Keratinocyte (primary cell): ENCODE measurements at regions of chr10 and their contacts with region 1.

Region 1: DNA sequence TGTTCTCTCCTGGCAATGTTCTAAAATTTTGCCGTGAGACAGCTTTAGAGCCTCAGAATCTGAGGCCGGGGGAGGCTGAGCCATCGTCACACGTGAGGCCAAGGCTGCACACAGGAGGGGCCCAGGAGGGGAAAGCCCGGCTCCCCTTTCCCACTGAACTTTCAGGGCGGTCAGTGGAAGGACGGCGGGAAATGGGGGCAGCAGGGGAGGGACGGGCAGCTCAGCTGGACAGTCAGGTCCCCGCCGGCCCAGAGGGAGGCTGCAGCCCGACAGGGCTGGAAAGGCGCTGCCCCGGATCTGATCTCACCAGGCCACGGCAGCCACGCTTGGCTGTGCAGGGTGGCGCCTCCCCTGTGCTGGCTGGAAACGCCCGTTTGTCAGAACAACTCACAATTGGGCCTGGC is 43.3 kb upstream of the ADGRA1 start:
- DNase-seq: no peak
- H3K4me3 ChIP-seq: no peak overlapping the region
- H3K27ac ChIP-seq: no peak overlapping the region
- H3K4me1 ChIP-seq: no peaks in the 10 kb centered on the region
- H3K27me3 ChIP-seq: peaks cover 25% of the 10 kb centered on the region
- CTCF ChIP-seq: no peak

Region 2: DNA sequence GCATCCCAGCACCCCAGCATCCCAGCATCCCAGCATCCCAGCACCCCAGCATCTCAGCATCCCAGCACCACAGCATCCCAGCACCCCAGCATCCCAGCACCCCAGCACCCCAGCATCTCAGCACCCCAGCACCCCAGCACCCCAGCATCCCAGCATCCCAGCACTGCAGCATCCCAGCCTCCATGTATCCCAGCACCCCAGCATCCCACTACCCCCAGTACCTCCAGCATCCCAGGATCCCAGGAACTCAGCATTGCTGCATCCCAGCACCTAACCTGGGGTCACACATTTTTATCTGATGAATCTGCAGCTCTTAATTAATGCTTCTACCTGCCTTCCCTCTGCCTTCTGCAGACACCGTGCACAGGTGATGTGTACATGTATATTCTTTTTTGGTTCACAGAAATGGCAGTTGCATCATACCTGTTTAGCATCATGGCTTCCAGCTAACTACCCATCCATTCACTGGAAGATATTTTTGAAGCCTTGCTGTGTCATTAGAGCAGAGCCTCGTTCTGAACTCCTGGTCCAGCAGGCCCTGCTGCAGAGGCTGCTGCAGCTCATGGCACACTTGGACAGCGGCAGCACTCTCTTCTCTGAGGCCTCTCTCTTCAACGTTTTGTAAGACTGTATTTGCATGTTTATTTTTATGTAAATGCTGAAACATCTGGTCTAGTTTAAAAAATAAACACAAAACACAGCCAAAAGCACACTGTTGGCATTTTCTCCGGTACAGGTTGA is 97.4 kb before region 1 on chr10:
- dilution Hi-C with region 1: no loop called
- DNase-seq: no peak
- H3K4me3 ChIP-seq: no peak overlapping the region
- H3K27ac ChIP-seq: no peak overlapping the region
- H3K4me1 ChIP-seq: no peaks in the 10 kb centered on the region
- H3K27me3 ChIP-seq: peaks cover 8% of the 10 kb centered on the region
- CTCF ChIP-seq: no peak

Region 3: GRCh38 chr10:132994185-132994796 is 50.1 kb before region 1 on chr10:
- dilution Hi-C with region 1: loop called (anchors 10 kb)
- DNase-seq: no peak
- H3K4me3 ChIP-seq: peak overlapping the region; percentile 14 to 38 (median 25)
- H3K27ac ChIP-seq: no peak overlapping the region
- H3K4me1 ChIP-seq: no peaks in the 10 kb centered on the region
- H3K27me3 ChIP-seq: peaks cover 18% of the 10 kb centered on the region
- CTCF ChIP-seq: no peak